HepG2 (cell line): ENCODE measurements at regions of chr1 and their contacts with region 1.

Region 1: GRCh38 chr1:93846211-93846991 is 32.6 kb downstream of the DNTTIP2 start:
- DNase-seq: peak; percentile 76
- ATAC-seq: peak; percentile 83
- H3K4me3 ChIP-seq: peak overlapping the region; percentile 90 to 91 (median 91)
- H3K27ac ChIP-seq: peak overlapping the region; percentile 88
- H3K4me1 ChIP-seq: peaks cover 20% of the 10 kb centered on the region
- H3K27me3 ChIP-seq: no peaks in the 10 kb centered on the region; a peak in 1 of 5 replicates
- CTCF ChIP-seq: peak; percentile 56
- EP300 ChIP-seq: no peak
- POLR2A ChIP-seq: peak; percentile 69 to 77
- RAD21 ChIP-seq: no peak; the same call in 1 of the 2 replicates

Region 2: DNA sequence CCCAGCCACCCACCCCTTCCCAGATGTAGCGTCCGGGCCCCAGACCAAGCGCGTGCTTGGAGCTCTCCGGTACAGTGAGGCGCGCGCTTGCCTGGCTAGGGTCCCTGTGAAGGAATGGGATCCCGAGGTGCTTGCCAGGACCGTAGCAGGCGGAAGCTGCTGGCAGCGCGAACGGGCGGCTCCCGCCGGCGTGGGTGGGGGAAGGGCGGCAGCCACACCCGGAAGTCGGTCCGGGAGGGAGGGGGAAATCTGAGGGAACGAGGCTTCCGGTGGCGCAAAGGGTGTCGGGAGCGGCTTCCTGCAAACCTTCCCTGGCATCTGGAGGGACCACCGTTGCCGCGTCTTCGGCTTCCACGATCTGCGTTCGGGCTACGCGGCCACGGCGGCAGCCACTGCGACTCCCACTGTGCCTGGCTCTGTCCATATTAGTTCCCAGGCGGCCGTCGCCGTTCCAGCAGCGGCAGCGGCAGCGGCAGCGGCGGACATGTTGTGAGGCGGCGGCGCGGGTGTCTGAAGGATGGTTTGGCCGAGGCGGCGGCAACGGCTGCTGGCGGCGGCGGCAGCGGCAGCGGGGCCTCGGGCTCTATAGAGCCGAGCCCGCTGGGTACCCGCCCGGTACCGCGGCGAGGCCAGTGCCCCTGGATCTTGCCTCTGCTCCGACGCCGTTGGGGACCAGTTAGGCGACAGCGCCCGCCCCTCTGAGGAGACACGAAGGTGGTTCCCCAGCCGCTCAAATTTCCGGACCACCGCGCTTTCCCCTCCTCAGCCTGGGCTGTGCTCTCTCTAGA is 500.6 kb before region 1 on chr1 and contains the start of gene DR1:
- CTCF ChIA-PET with region 1: no interaction called
- POLR2A ChIA-PET with region 1: interaction called, 7 read pairs
- in situ Hi-C with region 1: no loop called
- intact Hi-C with region 1: loop called (anchors 5 kb)
- DNase-seq: peak; percentile 85
- ATAC-seq: peak; percentile 94
- H3K4me3 ChIP-seq: peak within 1 kb of the TSS; percentile 81 to 99 (median 93)
- H3K27ac ChIP-seq: peak within 1 kb of the TSS; percentile 94
- H3K4me1 ChIP-seq: peaks cover 35% of the 10 kb centered on the region
- H3K27me3 ChIP-seq: no peaks in the 10 kb centered on the region; a peak in 1 of 5 replicates
- CTCF ChIP-seq: no peak; the same call in 1 of the 2 replicates
- EP300 ChIP-seq: peak in 1 of 2 experiments; percentile 70; a peak in 2 of 4 replicates
- POLR2A ChIP-seq: peak; percentile 89 to 92
- RAD21 ChIP-seq: peak; percentile 45; the same call in 1 of the 2 replicates
- total RNA-seq, gene DR1: 42.3 and 54.7 TPM in 2 replicates

Region 3: DNA sequence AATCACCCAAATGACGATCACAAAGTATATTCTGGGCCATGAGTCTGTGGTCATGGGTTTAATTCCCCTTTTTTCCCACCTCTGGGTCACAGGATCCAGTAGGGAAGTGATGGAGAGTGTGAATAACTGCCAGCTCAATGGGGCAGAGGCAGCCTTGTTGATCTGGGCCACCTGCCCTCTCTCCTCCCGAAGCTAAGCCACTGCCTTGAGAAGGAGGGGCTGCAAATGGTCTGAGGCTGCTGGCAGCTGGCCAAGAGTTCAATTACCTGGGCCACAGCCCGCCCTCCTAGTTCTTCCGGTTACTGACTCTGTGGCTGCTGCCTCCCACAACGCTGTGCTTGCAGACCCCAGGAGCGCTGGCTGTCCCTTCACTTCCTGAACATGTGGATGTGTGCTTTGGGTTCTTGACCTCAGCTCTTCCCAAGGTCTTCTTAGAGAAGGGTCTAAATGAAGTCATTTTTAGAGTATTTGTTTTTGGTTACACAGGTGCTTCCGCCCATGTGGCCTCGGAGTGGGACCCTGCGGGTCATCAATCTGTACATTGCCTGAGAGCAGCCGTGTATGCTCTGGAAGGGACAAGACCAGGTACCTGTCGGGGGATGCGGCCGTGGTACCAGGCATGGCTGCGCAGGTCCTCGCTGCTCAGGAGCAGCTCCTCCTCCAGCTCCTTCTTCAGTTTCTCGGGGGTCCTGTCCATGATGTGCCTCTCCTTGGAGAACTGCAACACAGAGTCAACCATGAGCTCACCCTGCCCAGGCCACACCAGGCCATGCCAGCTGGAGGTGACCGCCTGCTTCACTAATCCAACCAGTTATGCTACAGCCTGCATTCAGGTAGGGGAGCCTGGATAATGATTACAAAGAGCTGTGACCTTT is 254.5 kb before region 1 on chr1:
- CTCF ChIA-PET with region 1: no interaction called
- POLR2A ChIA-PET with region 1: interaction called, 15 read pairs
- in situ Hi-C with region 1: no loop called
- intact Hi-C with region 1: no loop called
- DNase-seq: peak; percentile 90
- ATAC-seq: peak; percentile 86
- H3K4me3 ChIP-seq: peak overlapping the region; percentile 81 to 88 (median 86)
- H3K27ac ChIP-seq: peak overlapping the region; percentile 94
- H3K4me1 ChIP-seq: peaks cover 58% of the 10 kb centered on the region
- H3K27me3 ChIP-seq: no peaks in the 10 kb centered on the region; a peak in 1 of 5 replicates
- CTCF ChIP-seq: no peak
- EP300 ChIP-seq: peak in 1 of 2 experiments; percentile 75; a peak in 2 of 4 replicates
- POLR2A ChIP-seq: peak; percentile 69 to 71
- RAD21 ChIP-seq: no peak; the same call in 1 of the 2 replicates

Region 4: GRCh38 chr1:93758842-93759515 is 87.4 kb before region 1 on chr1:
- CTCF ChIA-PET with region 1: no interaction called
- POLR2A ChIA-PET with region 1: interaction called, 12 read pairs
- in situ Hi-C with region 1: no loop called
- intact Hi-C with region 1: no loop called
- DNase-seq: peak; percentile 94
- ATAC-seq: peak; percentile 90
- H3K4me3 ChIP-seq: peak overlapping the region in 1 of 3 experiments; percentile 47; a peak in 1 of 6 replicates
- H3K27ac ChIP-seq: peak overlapping the region; percentile 89
- H3K4me1 ChIP-seq: peaks cover 71% of the 10 kb centered on the region
- H3K27me3 ChIP-seq: no peaks in the 10 kb centered on the region
- CTCF ChIP-seq: peak; percentile 41
- EP300 ChIP-seq: peak; percentile 86 to 94; a peak in 3 of 4 replicates
- POLR2A ChIP-seq: peak in 1 of 2 experiments; percentile 39; a peak in 1 of 4 replicates
- RAD21 ChIP-seq: no peak; the same call in 1 of the 2 replicates

Region 5: GRCh38 chr1:93827633-93828366 is 18.6 kb before region 1 on chr1:
- CTCF ChIA-PET with region 1: no interaction called
- POLR2A ChIA-PET with region 1: interaction called, 55 read pairs
- in situ Hi-C with region 1: no loop called
- intact Hi-C with region 1: no loop called
- DNase-seq: peak; percentile 94
- ATAC-seq: peak; percentile 98
- H3K4me3 ChIP-seq: peak overlapping the region in 1 of 3 experiments; percentile 1; a peak in 1 of 6 replicates
- H3K27ac ChIP-seq: peak overlapping the region; percentile 73
- H3K4me1 ChIP-seq: peaks cover 29% of the 10 kb centered on the region
- H3K27me3 ChIP-seq: no peaks in the 10 kb centered on the region
- CTCF ChIP-seq: 0 out of 2 replicates have a peak, but pooled peaks have one; percentile 9
- EP300 ChIP-seq: peak; percentile 77 to 89; a peak in 3 of 4 replicates
- POLR2A ChIP-seq: no peak
- RAD21 ChIP-seq: peak; percentile 40